Ovary (tissue), 10 donors: ENCODE measurements at regions of chr7 and their contacts with region 1.

Region 1: DNA sequence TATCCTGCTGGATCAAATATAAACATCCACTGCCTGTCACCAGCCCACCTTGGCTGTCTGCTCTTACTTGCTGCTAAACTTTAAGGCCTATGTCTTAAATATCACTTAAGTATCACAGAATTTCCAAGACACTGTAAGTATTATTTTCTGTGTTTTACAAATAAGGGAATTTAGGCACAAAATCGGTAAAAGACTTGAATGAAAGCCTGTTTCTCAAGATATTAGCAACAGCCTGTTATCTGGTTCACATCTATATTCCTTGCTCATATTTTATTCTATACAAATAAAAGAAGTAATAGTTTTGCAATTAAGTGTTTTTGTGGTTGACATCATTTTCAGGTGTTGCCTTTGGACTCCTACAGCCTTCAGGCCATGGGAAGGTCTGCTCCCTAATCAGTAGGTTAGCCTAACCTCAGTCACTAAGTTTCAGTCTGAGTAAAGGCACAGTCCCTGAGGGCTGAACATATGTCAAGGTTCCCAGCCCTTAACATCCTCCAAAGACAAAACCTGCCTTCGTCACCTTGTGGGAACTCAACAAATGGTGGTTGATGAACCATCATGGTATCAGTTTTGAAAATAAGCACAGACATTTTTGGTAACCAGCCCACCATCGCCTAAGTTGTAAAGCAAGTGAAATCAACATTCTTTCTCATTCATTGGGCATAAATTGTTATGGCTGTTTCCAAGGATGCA is 127.1 kb downstream of the CREB5 start:
- DNase-seq: no peak
- H3K4me3 ChIP-seq: no peak overlapping the region
- H3K27ac ChIP-seq: no peak overlapping the region
- H3K4me1 ChIP-seq: no peaks in the 10 kb centered on the region
- H3K27me3 ChIP-seq: no peaks in the 10 kb centered on the region
- CTCF ChIP-seq: no peak
- EP300 ChIP-seq: no peak
- POLR2A ChIP-seq: no peak

Region 2: GRCh38 chr7:28378574-28379149 is 160.8 kb before region 1 on chr7:
- intact Hi-C with region 1: no loop called
- DNase-seq: no peak
- H3K4me3 ChIP-seq: no peak overlapping the region
- H3K27ac ChIP-seq: no peak overlapping the region
- H3K4me1 ChIP-seq: peaks cover 2% of the 10 kb centered on the region
- H3K27me3 ChIP-seq: no peaks in the 10 kb centered on the region
- CTCF ChIP-seq: no peak
- EP300 ChIP-seq: no peak
- POLR2A ChIP-seq: no peak

Region 3: GRCh38 chr7:28587211-28587610 is 47.8 kb after region 1 on chr7:
- intact Hi-C with region 1: loop called in 1 of 4 experiments (anchors 2 kb)
- DNase-seq: no peak
- H3K4me3 ChIP-seq: no peak overlapping the region
- H3K27ac ChIP-seq: no peak overlapping the region
- H3K4me1 ChIP-seq: no peaks in the 10 kb centered on the region
- H3K27me3 ChIP-seq: no peaks in the 10 kb centered on the region
- CTCF ChIP-seq: no peak
- EP300 ChIP-seq: no peak
- POLR2A ChIP-seq: no peak